Heart right ventricle (tissue), 16 donors: ENCODE measurements at regions of chr17 and their contacts with region 1.

Region 1: DNA sequence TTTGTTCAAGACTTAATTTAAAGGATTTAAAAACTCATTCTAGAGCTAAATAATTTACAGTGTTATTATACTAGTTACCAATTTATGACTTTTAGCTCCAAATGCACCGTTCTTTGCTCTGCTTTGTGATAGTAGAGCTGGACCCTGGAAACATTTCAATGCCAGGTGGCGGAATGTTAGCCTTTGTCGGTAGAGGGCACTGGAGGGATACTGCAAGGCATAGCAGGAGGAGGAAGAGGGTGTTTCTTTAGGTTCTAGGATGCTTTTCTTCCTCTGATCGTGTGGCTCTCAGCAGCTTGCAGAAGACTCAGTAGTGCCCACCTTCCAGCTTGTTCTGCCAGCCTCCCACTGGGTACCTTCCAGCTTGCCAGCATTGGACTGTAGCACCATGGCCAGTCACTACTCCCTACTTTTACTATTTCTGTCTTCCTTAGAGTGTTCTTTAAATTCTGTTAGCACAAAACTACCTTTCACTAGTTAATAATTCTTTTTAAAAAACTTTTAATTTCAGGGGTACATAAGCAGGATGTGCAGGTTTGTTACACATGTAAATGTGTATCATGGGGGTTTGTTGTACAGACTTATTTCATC is 325.3 kb downstream of the UTP18 start:
- DNase-seq: no peak
- ATAC-seq: no peak
- H3K4me3 ChIP-seq: no peak overlapping the region
- H3K27ac ChIP-seq: no peak overlapping the region
- H3K4me1 ChIP-seq: no peaks in the 10 kb centered on the region
- H3K27me3 ChIP-seq: peaks cover 0 to 11% (median 0%) of the 10 kb centered on the region in 7 donors
- CTCF ChIP-seq: peak; percentile 16 to 68 (median 44)

Region 2: DNA sequence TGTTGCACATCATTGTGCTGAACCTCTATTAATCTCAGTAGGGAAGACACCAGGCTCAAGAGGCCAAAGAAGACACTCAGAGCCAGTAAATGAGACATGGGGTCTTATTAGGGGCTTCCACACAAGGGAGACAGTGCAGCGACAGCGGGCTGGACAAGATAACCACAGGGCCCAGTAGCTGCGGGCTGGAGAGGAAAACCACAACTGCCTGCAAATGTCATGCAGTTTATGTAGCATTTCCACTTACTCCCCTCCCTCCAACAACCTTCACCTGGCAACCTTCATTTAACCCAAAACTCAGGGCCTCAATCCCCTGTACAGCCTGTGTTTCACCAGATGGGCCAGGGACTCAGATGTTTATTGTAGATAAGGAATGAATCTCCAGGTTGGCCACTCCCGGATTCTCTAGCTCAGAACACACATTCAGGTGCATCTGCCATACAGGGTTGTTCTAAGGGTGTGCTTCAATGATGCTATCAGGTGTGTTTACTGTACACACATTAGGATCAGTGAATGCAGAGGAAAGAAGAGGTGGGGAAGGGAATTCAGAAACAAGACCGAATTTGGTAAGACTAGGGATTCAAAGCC is 139.6 kb before region 1 on chr17:
- intact Hi-C with region 1: no loop called
- DNase-seq: no peak
- ATAC-seq: no peak
- H3K4me3 ChIP-seq: no peak overlapping the region
- H3K27ac ChIP-seq: no peak overlapping the region
- H3K4me1 ChIP-seq: no peaks in the 10 kb centered on the region
- H3K27me3 ChIP-seq: peaks cover 0 to 17% (median 0%) of the 10 kb centered on the region in 7 donors
- CTCF ChIP-seq: no peak

Region 3: GRCh38 chr17:51617881-51618455 is 32.4 kb after region 1 on chr17:
- intact Hi-C with region 1: no loop called
- DNase-seq: no peak
- ATAC-seq: no peak
- H3K4me3 ChIP-seq: no peak overlapping the region
- H3K27ac ChIP-seq: no peak overlapping the region
- H3K4me1 ChIP-seq: no peaks in the 10 kb centered on the region
- H3K27me3 ChIP-seq: peaks cover 0 to 11% (median 0%) of the 10 kb centered on the region in 7 donors
- CTCF ChIP-seq: no peak

Region 4: DNA sequence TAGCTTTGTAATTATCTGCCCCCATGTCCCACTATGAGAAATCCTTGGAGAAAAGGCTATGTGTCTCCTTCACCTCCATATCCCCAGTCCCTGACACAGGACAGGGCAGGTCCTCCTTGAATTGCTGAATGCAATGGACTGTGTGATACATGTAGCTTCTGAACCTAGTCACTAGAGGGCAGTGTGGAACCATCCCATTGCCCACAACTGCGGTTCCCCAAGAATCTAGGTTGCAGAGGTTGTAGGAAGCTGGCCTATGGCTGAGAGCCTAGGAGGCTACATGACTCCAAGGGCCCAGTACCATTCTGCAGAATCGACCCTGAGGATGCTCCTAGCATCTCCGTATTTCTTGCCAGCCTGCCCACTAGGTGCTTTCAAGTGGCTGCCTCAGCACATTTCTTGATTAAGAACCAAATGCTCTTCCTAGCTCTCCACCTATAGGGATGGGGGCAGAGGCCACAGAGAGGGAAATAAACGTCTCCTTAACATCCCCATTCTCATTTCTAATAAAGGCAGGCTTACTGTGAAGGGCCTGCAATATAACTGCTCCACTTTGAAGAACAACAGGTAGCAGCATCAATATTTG is 178.9 kb after region 1 on chr17:
- intact Hi-C with region 1: loop called in 1 of 10 experiments (anchors 10 kb)
- DNase-seq: peak in 1 of 2 donors; percentile 32
- ATAC-seq: peak in 6 of 8 donors; percentile 60 to 83 (median 70)
- H3K4me3 ChIP-seq: no peak overlapping the region
- H3K27ac ChIP-seq: no peak overlapping the region
- H3K4me1 ChIP-seq: no peaks in the 10 kb centered on the region
- H3K27me3 ChIP-seq: peaks cover 0 to 44% (median 14%) of the 10 kb centered on the region in 7 donors
- CTCF ChIP-seq: peak; percentile 45 to 88 (median 80)